ENCODE measurements at regions of chr19 and their contacts with region 1.

Region 1: GRCh38 chr19:4791170-4792018 is at the start of gene FEM1A:
- DNase-seq: peak; percentile 100
- H3K4me3 ChIP-seq: peak within 1 kb of the TSS; percentile 79 to 89 (median 79)
- H3K4me3 Mint-ChIP-seq: peak within 1 kb of the TSS; percentile 71 to 82
- H3K27ac ChIP-seq: peak within 1 kb of the TSS; percentile 61 to 92
- H3K27ac Mint-ChIP-seq: peak within 1 kb of the TSS; percentile 63 to 89 (median 76)
- H3K4me1 ChIP-seq: peaks cover 20 to 27% of the 10 kb centered on the region in 2 donors
- H3K4me1 Mint-ChIP-seq: peaks cover 21% of the 10 kb centered on the region
- H3K27me3 ChIP-seq: peaks cover 0 to 2% of the 10 kb centered on the region in 2 donors
- H3K27me3 Mint-ChIP-seq: peaks cover 5 to 20% (median 17%) of the 10 kb centered on the region in 3 donors
- CTCF ChIP-seq: peak; percentile 95
- polyA plus RNA-seq, gene FEM1A: 2.1 to 4.2 (median 2.4) TPM

Region 2: DNA sequence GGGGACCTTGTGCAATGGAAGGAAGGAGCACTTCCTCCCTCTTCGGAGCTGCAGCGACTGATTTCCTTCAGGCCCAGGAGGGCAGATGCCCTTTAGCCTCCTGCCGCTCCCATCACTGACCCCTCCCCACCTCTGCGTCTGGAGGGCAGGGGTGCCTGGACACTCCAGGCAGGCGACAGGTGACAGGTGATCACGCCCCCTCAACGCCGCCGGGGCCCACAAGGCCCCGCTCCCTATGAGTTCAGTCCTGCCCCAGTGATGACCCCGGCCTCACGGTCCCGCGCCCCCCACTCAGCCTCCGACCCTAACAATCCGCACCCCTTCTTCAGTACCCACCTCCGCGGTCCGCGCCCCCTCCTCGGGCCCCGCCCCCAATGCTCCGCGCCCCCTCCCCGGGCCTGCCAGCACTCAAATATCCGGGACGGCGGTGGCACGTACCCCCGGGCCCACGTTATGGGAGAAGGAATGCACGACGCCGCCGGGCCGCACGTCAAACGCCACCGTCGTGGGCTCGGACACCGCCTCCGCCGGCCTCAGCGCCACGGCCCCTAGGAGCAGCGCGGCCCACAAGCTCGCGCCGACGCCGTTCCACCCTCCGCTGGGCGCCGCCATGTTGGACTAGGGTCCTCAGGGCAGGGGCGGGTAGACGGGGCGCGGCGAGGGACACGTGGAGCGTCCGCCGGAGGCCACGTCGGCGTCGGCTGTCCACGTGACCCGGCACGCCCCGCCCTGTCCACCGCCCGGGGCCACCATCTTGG is 121.5 kb before region 1 on chr19 and contains the start of gene MYDGF:
- intact Hi-C with region 1: loop called in 1 of 2 experiments (anchors 5 kb)
- DNase-seq: peak; percentile 87 to 92 (median 89)
- H3K4me3 ChIP-seq: peak within 1 kb of the TSS; percentile 75 to 95 (median 85)
- H3K4me3 Mint-ChIP-seq: peak within 1 kb of the TSS; percentile 87 to 91
- H3K27ac ChIP-seq: peak within 1 kb of the TSS; percentile 82 to 85
- H3K27ac Mint-ChIP-seq: peak within 1 kb of the TSS; percentile 82 to 96 (median 93)
- H3K4me1 ChIP-seq: peaks cover 13 to 25% of the 10 kb centered on the region in 2 donors
- H3K4me1 Mint-ChIP-seq: peaks cover 14% of the 10 kb centered on the region
- H3K27me3 ChIP-seq: no peaks in the 10 kb centered on the region
- H3K27me3 Mint-ChIP-seq: peaks cover 0 to 2% (median 0%) of the 10 kb centered on the region in 3 donors
- CTCF ChIP-seq: no peak
- polyA plus RNA-seq, gene MYDGF: 64.6 to 165 (median 160) TPM

Region 3: DNA sequence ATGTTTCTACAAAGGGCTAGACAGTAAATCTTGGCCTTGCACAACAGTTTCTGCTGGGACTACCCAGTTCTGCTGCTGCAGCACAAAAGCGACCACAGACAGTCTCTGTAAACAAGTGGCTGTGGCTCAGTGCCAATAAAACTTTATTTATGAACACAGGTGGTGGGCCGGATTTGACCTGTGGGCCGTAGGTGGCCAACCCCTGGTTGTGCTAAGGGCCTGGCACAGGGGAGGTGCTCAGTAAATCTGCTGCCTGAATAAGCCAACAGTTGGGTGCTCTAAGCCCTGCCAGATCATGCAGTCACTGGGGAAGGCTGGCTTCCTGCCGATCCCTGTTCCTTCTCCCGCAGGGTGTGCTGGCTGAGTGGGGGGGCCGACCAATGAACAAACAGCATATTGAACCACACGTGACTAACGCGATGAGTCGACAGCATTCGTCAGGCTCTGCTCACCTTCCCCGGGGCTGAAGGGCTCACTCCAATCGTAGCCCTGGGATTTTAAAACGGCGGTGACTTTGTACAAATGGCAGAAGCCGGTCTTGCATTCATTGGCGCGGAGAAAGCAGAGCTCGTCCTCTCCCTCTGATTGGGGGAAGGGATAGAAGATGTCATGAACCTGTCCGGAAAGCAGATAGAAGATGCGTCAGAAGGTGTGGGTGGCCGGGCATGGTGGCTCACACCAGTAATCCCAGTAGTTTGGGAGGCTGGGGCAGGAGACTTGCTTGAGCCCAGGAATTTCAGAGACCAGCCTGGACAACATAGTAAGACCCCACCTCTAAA is 97.0 kb before region 1 on chr19:
- intact Hi-C with region 1: no loop called
- DNase-seq: no peak
- H3K4me3 ChIP-seq: no peak overlapping the region
- H3K4me3 Mint-ChIP-seq: no peak overlapping the region
- H3K27ac ChIP-seq: no peak overlapping the region
- H3K27ac Mint-ChIP-seq: peak overlapping the region in 3 of 7 donors; percentile 11 to 65 (median 58)
- H3K4me1 ChIP-seq: peaks cover 0 to 6% of the 10 kb centered on the region in 2 donors
- H3K4me1 Mint-ChIP-seq: peaks cover 8% of the 10 kb centered on the region
- H3K27me3 ChIP-seq: no peaks in the 10 kb centered on the region
- H3K27me3 Mint-ChIP-seq: peaks cover 0 to 3% (median 2%) of the 10 kb centered on the region in 3 donors
- CTCF ChIP-seq: no peak

Region 4: DNA sequence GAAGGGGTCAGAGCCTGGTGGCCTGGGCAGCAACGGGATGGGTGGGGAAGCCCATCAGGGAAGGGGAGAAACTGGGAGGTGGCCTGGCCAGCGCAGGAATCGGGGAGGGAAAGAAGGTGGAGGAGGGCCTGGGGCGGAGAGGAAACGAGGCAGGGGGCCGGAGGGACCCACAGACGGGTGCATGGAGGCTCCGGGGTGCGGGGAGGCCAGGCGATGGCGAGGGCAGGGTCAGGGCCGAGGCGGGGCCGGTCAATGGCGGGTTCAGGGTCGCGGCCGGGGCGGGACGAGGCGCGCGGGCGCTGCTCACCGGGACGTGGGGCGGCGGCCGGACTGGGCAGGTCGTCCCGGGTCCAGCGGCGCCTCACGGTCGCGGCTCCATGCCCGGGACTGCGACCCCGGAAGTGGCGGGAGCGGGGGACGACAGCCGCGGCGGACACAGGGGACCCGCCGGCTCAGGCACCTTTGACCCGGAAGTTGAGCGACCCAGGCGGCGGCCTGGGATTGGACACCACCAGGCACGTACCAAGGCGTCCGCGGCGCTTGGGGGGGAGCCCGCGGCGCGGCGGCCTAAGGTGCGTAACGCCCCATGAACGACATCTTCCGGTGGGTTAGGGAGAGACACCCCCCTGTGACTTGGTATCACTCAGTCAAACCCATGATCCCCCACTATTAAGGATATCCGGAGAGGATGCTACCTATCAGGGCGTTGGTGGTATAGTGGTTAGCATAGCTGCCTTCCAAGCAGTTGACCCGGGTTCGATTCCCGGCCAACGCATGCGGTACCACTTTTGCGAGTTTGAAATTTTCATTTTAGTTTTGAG is 67.8 kb before region 1 on chr19 and contains the start of gene DPP9:
- intact Hi-C with region 1: loop called (anchors 1 to 2 kb)
- DNase-seq: peak; percentile 100
- H3K4me3 ChIP-seq: peak within 1 kb of the TSS; percentile 84 to 93 (median 91)
- H3K4me3 Mint-ChIP-seq: peak within 1 kb of the TSS; percentile 94 to 95
- H3K27ac ChIP-seq: peak within 1 kb of the TSS; percentile 64 to 83
- H3K27ac Mint-ChIP-seq: peak within 1 kb of the TSS; percentile 87 to 98 (median 95)
- H3K4me1 ChIP-seq: peaks cover 22 to 31% of the 10 kb centered on the region in 2 donors
- H3K4me1 Mint-ChIP-seq: peaks cover 23% of the 10 kb centered on the region
- H3K27me3 ChIP-seq: no peaks in the 10 kb centered on the region
- H3K27me3 Mint-ChIP-seq: peaks cover 0 to 8% (median 3%) of the 10 kb centered on the region in 3 donors
- CTCF ChIP-seq: no peak
- polyA plus RNA-seq, gene DPP9: 12.6 to 23.8 (median 13.9) TPM

Region 5: GRCh38 chr19:4732680-4733114 is 58.7 kb before region 1 on chr19:
- intact Hi-C with region 1: loop called in 1 of 2 experiments (anchors 2 kb)
- DNase-seq: peak; percentile 43 to 65 (median 53)
- H3K4me3 ChIP-seq: peak overlapping the region in 1 of 3 experiments; percentile 28
- H3K4me3 Mint-ChIP-seq: peak overlapping the region in 1 of 2 donors; percentile 15
- H3K27ac ChIP-seq: no peak overlapping the region
- H3K27ac Mint-ChIP-seq: no peak overlapping the region
- H3K4me1 ChIP-seq: peaks cover 0 to 3% of the 10 kb centered on the region in 2 donors
- H3K4me1 Mint-ChIP-seq: peaks cover 12% of the 10 kb centered on the region
- H3K27me3 ChIP-seq: peaks cover 0 to 6% of the 10 kb centered on the region in 2 donors
- H3K27me3 Mint-ChIP-seq: peaks cover 7 to 18% (median 14%) of the 10 kb centered on the region in 3 donors
- CTCF ChIP-seq: peak; percentile 75